Activated CD4-positive, alpha-beta T cell treated with anti-CD3 and anti-CD28 coated beads, Interleukin-2, amount 10 ng/mL, durations not matched to agents 7 days and 5 days (primary cell): ENCODE measurements at regions of chr17 and their contacts with region 1.

Region 1: DNA sequence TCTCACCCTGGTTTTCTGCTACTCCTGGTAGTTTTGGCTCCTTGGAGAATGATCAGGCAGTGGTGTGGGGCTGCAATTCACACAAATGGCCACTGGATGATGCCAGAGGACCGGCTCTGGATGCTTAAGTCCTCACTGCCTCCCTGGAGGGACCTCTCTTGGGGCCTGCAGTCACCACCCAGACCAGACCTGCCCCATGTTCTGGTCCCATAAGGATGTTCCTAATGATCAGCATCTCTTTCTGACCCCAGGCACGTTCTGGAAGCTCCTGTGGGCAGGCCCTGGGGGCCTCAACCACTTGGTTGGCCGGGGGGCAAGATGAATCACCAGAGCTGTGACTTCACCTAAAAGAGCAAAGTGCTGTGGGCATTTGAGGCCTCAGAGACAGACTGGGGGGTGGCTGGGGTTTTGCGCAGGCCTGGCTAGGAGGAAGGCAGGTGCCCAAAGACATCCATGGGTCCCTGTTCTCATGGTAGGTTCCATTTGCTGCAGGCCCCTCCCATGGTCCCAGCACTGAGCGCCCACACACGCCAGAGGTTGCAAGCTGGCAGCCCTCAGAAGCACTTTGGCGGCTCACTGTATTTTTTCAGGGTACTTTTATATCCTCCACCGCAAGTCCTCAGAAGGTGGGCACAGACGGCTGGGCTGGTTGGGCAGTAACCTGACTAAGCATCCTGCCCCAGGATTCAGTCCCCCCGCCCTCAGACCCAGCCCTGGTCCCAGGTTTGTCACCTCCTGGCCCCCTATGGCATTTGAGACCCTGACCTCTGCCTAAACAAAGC is 53.2 kb downstream of the NT5M start:
- DNase-seq: peak; percentile 72
- H3K4me3 Mint-ChIP-seq: no peak overlapping the region
- H3K27ac Mint-ChIP-seq: peak overlapping the region; percentile 26
- H3K4me1 Mint-ChIP-seq: no peaks in the 10 kb centered on the region
- H3K27me3 Mint-ChIP-seq: peaks cover 14% of the 10 kb centered on the region

Region 2: GRCh38 chr17:17641621-17642409 is 285.5 kb after region 1 on chr17:
- CTCF ChIA-PET with region 1: interaction called, 13 read pairs
- POLR2A ChIA-PET with region 1: no interaction called
- DNase-seq: peak; percentile 87
- H3K4me3 Mint-ChIP-seq: no peak overlapping the region
- H3K27ac Mint-ChIP-seq: no peak overlapping the region
- H3K4me1 Mint-ChIP-seq: no peaks in the 10 kb centered on the region
- H3K27me3 Mint-ChIP-seq: no peaks in the 10 kb centered on the region